ENCODE measurements at regions of chr16 and their contacts with region 1.

Region 1: GRCh38 chr16:56576585-56577293 is 11.9 kb downstream of the MT4 start:
- DNase-seq: peak; percentile 85 to 89 (median 87)
- H3K4me3 ChIP-seq: no peak overlapping the region
- H3K4me3 Mint-ChIP-seq: no peak overlapping the region
- H3K27ac ChIP-seq: no peak overlapping the region
- H3K27ac Mint-ChIP-seq: peak overlapping the region in 6 of 7 donors; percentile 36 to 79 (median 58)
- H3K4me1 ChIP-seq: no peaks in the 10 kb centered on the region
- H3K4me1 Mint-ChIP-seq: peaks cover 4 to 9% (median 6%) of the 10 kb centered on the region in 4 donors
- H3K27me3 ChIP-seq: no peaks in the 10 kb centered on the region
- H3K27me3 Mint-ChIP-seq: no peaks in the 10 kb centered on the region

Region 2: GRCh38 chr16:56513972-56514371 is 62.8 kb before region 1 on chr16:
- CTCF ChIA-PET with region 1: interaction called, 12 read pairs
- POLR2A ChIA-PET with region 1: interaction called, 3 read pairs
- intact Hi-C with region 1: loop called (anchors 1 kb)
- DNase-seq: peak; percentile 40 to 69 (median 53)
- H3K4me3 ChIP-seq: no peak overlapping the region
- H3K4me3 Mint-ChIP-seq: peak overlapping the region in 1 of 8 donors; percentile 1
- H3K27ac ChIP-seq: no peak overlapping the region
- H3K27ac Mint-ChIP-seq: peak overlapping the region in 2 of 7 donors; percentile 2 to 9
- H3K4me1 ChIP-seq: peaks cover 21% of the 10 kb centered on the region
- H3K4me1 Mint-ChIP-seq: peaks cover 41 to 61% (median 46%) of the 10 kb centered on the region in 4 donors
- H3K27me3 ChIP-seq: no peaks in the 10 kb centered on the region
- H3K27me3 Mint-ChIP-seq: no peaks in the 10 kb centered on the region

Region 3: DNA sequence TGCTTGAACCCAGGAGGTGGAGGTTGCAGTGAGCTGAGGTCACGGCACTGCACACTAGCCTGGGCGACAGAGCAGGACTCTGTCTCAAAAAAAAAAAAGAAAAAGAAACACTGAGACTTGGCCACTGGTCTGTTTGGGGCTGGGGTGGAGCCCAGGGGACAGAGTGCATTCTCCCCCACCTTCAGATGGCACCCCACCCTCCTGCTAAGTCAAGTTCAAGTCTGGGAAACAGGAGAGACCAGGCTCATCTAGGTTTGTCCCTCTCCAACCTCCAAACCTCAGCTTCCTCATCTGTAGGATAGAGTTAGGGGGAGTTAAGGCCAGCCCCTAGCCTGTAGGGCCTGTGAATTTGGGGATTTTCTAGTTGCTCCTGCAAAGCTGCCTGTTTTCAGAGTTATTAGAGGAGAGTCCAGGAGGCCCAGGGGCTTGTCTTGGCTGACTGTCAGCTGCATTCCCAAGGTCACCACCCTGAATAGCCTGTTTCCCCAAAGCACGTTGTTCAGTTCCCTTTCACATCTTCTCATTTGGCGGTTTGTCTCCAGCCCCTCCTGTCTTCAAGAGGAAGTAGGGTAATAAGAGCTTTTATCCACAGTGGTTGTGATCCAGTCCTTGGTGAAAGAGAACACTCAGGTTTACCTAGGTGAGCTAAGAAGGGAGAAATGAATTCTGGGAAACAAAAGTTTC is 14.8 kb after region 1 on chr16:
- CTCF ChIA-PET with region 1: interaction called, 15 read pairs
- POLR2A ChIA-PET with region 1: no interaction called
- intact Hi-C with region 1: no loop called
- DNase-seq: no peak
- H3K4me3 ChIP-seq: no peak overlapping the region
- H3K4me3 Mint-ChIP-seq: no peak overlapping the region
- H3K27ac ChIP-seq: no peak overlapping the region
- H3K27ac Mint-ChIP-seq: no peak overlapping the region
- H3K4me1 ChIP-seq: peaks cover 7% of the 10 kb centered on the region
- H3K4me1 Mint-ChIP-seq: peaks cover 3 to 15% (median 7%) of the 10 kb centered on the region in 4 donors
- H3K27me3 ChIP-seq: peaks cover 15% of the 10 kb centered on the region
- H3K27me3 Mint-ChIP-seq: peaks cover 13 to 31% of the 10 kb centered on the region in 2 donors

Region 4: GRCh38 chr16:56608043-56608875 is 31.5 kb after region 1 on chr16 and contains the start of gene MT2A:
- CTCF ChIA-PET with region 1: interaction called, 16 read pairs
- POLR2A ChIA-PET with region 1: interaction called, 7 read pairs
- intact Hi-C with region 1: loop called (anchors 2 kb)
- DNase-seq: peak; percentile 81 to 93 (median 85)
- H3K4me3 ChIP-seq: peak within 1 kb of the TSS; percentile 70 to 94
- H3K4me3 Mint-ChIP-seq: peak within 1 kb of the TSS; percentile 92 to 99 (median 98)
- H3K27ac ChIP-seq: peak within 1 kb of the TSS; percentile 82
- H3K27ac Mint-ChIP-seq: peak within 1 kb of the TSS; percentile 88 to 100 (median 96)
- H3K4me1 ChIP-seq: peaks cover 46% of the 10 kb centered on the region
- H3K4me1 Mint-ChIP-seq: peaks cover 26 to 53% (median 39%) of the 10 kb centered on the region in 4 donors
- H3K27me3 ChIP-seq: no peaks in the 10 kb centered on the region
- H3K27me3 Mint-ChIP-seq: peaks cover 0 to 3% of the 10 kb centered on the region in 2 donors
- total RNA-seq, gene MT2A: 15.8 to 17.7 TPM

Region 5: DNA sequence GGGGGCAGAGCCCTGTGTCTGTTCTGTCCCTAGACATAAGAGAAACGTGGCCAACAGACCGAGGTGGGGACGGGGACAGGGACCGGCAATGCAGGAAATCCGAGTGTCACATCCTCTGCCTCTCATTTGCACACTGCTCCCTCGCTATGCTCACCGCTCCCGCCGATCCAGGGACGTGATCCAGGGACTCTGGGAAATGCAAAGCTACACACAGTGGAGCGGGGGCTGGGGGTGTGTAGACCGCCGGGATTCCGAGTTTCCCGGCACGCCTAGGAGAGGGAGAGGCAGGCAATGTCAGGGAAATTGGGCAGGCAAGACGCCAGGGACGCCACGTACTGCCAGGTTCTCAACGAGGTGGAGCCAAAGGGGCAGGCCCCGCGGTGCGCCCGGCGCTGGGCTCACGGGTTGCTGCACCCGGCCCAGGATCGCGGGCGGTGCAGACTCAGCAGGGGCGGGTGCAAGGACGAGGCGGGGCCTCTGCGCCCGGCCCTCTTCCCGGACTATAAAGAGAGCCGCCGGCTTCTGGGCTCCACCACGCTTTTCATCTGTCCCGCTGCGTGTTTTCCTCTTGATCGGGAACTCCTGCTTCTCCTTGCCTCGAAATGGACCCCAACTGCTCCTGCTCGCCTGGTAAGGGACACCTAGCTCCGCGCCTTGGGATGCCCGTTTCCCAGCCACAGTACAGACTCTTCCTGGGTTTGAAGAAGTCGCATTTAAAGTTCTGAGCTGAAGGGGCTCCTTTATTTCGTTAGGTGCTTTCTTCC is 105.4 kb after region 1 on chr16 and contains the start of gene MT1X:
- CTCF ChIA-PET with region 1: interaction called, 12 read pairs
- POLR2A ChIA-PET with region 1: no interaction called
- intact Hi-C with region 1: no loop called
- DNase-seq: peak; percentile 83 to 93 (median 92)
- H3K4me3 ChIP-seq: peak within 1 kb of the TSS; percentile 64 to 79
- H3K4me3 Mint-ChIP-seq: peak within 1 kb of the TSS; percentile 94 to 99 (median 96)
- H3K27ac ChIP-seq: peak within 1 kb of the TSS; percentile 74
- H3K27ac Mint-ChIP-seq: peak within 1 kb of the TSS; percentile 96 to 99 (median 97)
- H3K4me1 ChIP-seq: peaks cover 22% of the 10 kb centered on the region
- H3K4me1 Mint-ChIP-seq: peaks cover 13 to 31% (median 18%) of the 10 kb centered on the region in 4 donors
- H3K27me3 ChIP-seq: no peaks in the 10 kb centered on the region
- H3K27me3 Mint-ChIP-seq: no peaks in the 10 kb centered on the region
- total RNA-seq, gene MT1X: 21.0 to 23.7 TPM

Measured in CD4-positive, alpha-beta memory T cell (primary cell).